Transverse colon (tissue), 4 donors: ENCODE measurements at regions of chr3 and their contacts with region 1.

Region 1: DNA sequence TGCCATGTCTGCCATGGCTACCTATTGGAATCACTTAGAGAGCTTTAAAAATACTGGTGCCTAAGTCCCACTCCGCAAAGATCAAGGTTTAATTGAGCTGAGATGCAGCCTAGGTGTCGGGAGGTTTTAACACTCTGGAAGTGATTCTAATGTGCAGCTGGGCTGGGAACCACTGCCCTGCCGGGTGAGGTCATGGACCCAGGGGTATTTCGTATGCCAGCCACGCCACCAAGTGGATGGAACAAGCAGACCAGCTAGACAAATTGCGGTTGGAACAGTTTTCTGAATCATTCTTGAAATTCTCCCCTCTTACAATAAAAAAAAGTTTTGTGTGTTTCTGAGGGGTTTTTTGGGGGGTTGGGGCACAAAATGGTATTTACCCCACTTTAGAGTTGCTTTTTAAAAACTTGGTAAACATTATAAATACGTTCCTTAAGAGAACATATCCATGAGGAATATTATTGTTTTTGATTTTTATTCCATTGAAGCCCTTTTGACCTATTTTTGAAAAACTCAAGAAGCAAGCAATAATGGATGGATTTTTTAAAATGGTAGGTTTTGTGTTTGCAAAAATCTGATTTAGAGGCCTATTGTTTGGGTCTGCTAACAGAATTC is 66.2 kb upstream of the CSTA start:
- DNase-seq: peak; percentile 71
- H3K4me3 ChIP-seq: no peak overlapping the region
- H3K27ac ChIP-seq: no peak overlapping the region
- H3K4me1 ChIP-seq: no peaks in the 10 kb centered on the region
- H3K27me3 ChIP-seq: no peaks in the 10 kb centered on the region
- CTCF ChIP-seq: peak; percentile 40 to 69 (median 57)
- EP300 ChIP-seq: no peak
- POLR2A ChIP-seq: no peak

Region 2: DNA sequence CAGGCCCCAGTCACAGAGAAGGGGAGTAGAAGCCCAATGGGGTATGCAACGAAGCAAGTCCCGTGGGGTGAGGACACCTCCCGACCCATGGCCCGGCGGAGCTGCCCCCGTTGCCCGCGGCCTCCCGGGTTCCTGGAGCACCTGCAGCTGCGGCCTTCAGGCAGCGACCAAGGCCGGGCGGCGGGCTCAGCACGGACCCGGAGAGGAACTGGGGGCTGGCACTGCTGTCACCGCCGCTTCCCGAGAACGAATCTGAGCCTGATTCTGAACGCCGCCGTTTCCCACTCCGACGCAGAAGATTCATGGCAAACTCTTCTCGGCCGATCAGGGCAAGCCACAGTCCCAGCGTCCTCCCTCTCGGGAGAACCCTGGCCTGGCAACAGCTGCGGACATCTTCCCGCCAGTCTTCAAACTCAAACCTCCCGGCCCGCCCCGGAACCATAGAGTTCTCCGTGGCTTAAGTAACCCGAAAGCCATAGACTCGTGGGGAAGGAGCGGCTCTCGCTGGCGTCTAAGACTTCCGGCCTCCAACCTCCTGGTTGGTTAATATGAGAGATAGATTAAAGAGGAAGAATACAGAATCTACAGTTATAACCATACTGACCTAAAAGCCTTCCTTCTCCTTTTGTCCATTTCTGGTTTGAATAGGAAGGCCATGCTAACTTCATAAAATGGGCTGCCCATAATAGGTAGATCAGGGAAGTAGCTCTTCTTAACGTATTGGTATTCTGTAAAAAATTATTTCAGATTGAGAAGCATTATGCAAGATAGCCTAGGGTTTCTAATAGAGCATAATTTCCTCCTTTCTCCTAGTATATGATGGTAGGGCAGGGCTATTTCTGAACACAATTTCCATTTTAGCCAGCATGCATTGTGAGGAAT is 713.0 kb before region 1 on chr3 and contains the start of gene POLQ:
- in situ Hi-C with region 1: loop called in 3 of 4 experiments (anchors 25 kb)
- intact Hi-C with region 1: no loop called
- DNase-seq: peak; percentile 92
- H3K4me3 ChIP-seq: peak within 1 kb of the TSS; percentile 28 to 68 (median 55)
- H3K27ac ChIP-seq: peak within 1 kb of the TSS; percentile 84 to 92 (median 87)
- H3K4me1 ChIP-seq: peaks cover 0 to 34% (median 17%) of the 10 kb centered on the region in 4 donors
- H3K27me3 ChIP-seq: no peaks in the 10 kb centered on the region
- CTCF ChIP-seq: no peak
- EP300 ChIP-seq: no peak
- POLR2A ChIP-seq: peak; percentile 26
- total RNA-seq, gene POLQ: under 0.01 to 25.1 (median 0.94) TPM

Region 3: GRCh38 chr3:121855555-121855954 is 403.3 kb before region 1 on chr3:
- in situ Hi-C with region 1: loop called in 1 of 4 experiments (anchors 25 kb)
- intact Hi-C with region 1: no loop called
- DNase-seq: no peak
- H3K4me3 ChIP-seq: no peak overlapping the region
- H3K27ac ChIP-seq: no peak overlapping the region
- H3K4me1 ChIP-seq: no peaks in the 10 kb centered on the region
- H3K27me3 ChIP-seq: no peaks in the 10 kb centered on the region
- CTCF ChIP-seq: peak in 3 of 5 experiments; percentile 12 to 20 (median 18)
- EP300 ChIP-seq: no peak
- POLR2A ChIP-seq: no peak

Region 4: DNA sequence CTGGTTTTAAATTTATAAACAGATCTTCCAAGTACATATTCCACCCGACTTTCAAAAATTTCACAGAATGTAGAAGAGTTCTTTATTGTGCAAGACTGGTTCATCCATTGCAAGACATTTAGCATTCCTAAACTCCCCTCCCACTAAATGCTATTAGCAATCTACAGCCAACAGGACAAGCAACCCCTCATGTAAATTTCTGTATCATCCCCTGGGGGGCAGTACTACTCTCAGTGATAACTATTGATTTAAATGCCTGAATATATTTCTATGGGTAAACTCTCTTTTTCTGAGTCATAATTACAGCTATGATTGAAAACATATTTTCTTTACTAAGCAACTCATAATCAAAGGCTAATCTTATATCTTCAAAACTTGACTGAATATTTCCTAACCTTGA is 375.4 kb before region 1 on chr3:
- in situ Hi-C with region 1: loop called in 1 of 4 experiments (anchors 25 kb)
- intact Hi-C with region 1: no loop called
- DNase-seq: no peak
- H3K4me3 ChIP-seq: no peak overlapping the region
- H3K27ac ChIP-seq: no peak overlapping the region
- H3K4me1 ChIP-seq: no peaks in the 10 kb centered on the region
- H3K27me3 ChIP-seq: no peaks in the 10 kb centered on the region
- CTCF ChIP-seq: peak; percentile 22 to 46 (median 35)
- EP300 ChIP-seq: no peak
- POLR2A ChIP-seq: no peak

Region 5: DNA sequence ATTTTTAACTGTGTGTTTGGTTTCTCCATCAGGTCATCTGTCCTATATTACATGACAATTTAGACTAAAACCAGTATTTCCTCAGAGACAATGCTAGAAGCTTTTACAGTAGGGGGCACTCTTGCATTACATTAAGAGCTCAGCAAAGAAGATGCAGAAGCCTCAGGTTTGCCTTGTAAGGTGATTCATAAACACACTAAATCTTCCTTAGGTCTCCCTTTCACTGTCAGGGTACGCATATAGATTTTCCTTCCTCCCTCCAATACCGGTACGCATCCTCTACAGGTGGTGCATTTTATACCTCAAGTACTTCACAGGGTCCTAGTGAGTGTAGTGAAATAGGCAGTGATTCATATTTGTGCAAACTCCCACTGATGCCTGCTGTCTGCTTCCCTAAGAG is 157.2 kb before region 1 on chr3:
- in situ Hi-C with region 1: loop called in 3 of 4 experiments (anchors 10 to 25 kb)
- intact Hi-C with region 1: no loop called
- DNase-seq: no peak
- H3K4me3 ChIP-seq: no peak overlapping the region
- H3K27ac ChIP-seq: no peak overlapping the region
- H3K4me1 ChIP-seq: no peaks in the 10 kb centered on the region
- H3K27me3 ChIP-seq: no peaks in the 10 kb centered on the region
- CTCF ChIP-seq: peak; percentile 35 to 62 (median 44)
- EP300 ChIP-seq: no peak
- POLR2A ChIP-seq: no peak

Region 6: GRCh38 chr3:122198966-122199365 is 59.9 kb before region 1 on chr3:
- in situ Hi-C with region 1: no loop called
- intact Hi-C with region 1: no loop called
- DNase-seq: no peak
- H3K4me3 ChIP-seq: no peak overlapping the region
- H3K27ac ChIP-seq: no peak overlapping the region
- H3K4me1 ChIP-seq: no peaks in the 10 kb centered on the region
- H3K27me3 ChIP-seq: no peaks in the 10 kb centered on the region
- CTCF ChIP-seq: no peak
- EP300 ChIP-seq: no peak
- POLR2A ChIP-seq: no peak

Region 7: GRCh38 chr3:122283796-122284445 is 25.1 kb after region 1 on chr3:
- in situ Hi-C with region 1: no loop called
- intact Hi-C with region 1: no loop called
- DNase-seq: no peak
- H3K4me3 ChIP-seq: no peak overlapping the region
- H3K27ac ChIP-seq: no peak overlapping the region
- H3K4me1 ChIP-seq: no peaks in the 10 kb centered on the region
- H3K27me3 ChIP-seq: no peaks in the 10 kb centered on the region
- CTCF ChIP-seq: no peak
- EP300 ChIP-seq: no peak
- POLR2A ChIP-seq: no peak